CD4-positive, alpha-beta T cell (primary cell): ENCODE measurements at regions of chr13 and their contacts with region 1.

Region 1: GRCh38 chr13:99356158-99357091 is 49.2 kb upstream of the GPR183 start:
- DNase-seq: peak in 12 of 14 experiments; percentile 42 to 97 (median 56)
- ATAC-seq: peak; percentile 54
- H3K4me3 ChIP-seq: peak overlapping the region; percentile 19
- H3K4me3 Mint-ChIP-seq: peak overlapping the region; percentile 49
- H3K27ac ChIP-seq: peak overlapping the region; percentile 93 to 97
- H3K27ac Mint-ChIP-seq: peak overlapping the region; percentile 97
- H3K4me1 ChIP-seq: peaks cover 95% of the 10 kb centered on the region
- H3K4me1 Mint-ChIP-seq: peaks cover 100% of the 10 kb centered on the region
- H3K27me3 ChIP-seq: no peaks in the 10 kb centered on the region
- H3K27me3 Mint-ChIP-seq: no peaks in the 10 kb centered on the region
- CTCF ChIP-seq: no peak

Region 2: DNA sequence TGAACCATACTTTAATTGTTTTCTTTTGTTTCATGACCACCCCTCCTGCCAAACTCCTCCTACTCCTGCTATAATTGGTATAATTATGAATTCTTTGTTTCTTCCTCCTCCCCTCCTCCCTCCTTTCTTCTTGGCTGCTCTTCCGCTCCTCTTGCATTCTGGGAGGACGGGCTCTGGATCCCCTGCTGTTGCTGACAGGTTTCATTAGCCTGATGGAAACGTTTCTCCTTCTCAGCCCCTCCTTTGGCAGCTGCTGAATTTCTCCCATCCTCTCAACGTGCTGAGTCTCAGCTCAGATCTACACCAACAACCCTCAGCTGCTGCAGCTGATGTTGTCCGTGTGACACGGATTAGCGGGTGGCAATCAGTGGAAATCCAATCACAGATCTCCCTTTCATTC is 252.9 kb before region 1 on chr13:
- CTCF ChIA-PET with region 1: no interaction called
- POLR2A ChIA-PET with region 1: no interaction called
- intact Hi-C with region 1: no loop called
- DNase-seq: no peak
- ATAC-seq: no peak
- H3K4me3 ChIP-seq: no peak overlapping the region
- H3K4me3 Mint-ChIP-seq: no peak overlapping the region
- H3K27ac ChIP-seq: no peak overlapping the region
- H3K27ac Mint-ChIP-seq: no peak overlapping the region
- H3K4me1 ChIP-seq: no peaks in the 10 kb centered on the region
- H3K4me1 Mint-ChIP-seq: no peaks in the 10 kb centered on the region
- H3K27me3 ChIP-seq: no peaks in the 10 kb centered on the region
- H3K27me3 Mint-ChIP-seq: no peaks in the 10 kb centered on the region
- CTCF ChIP-seq: no peak

Region 3: GRCh38 chr13:99214232-99214631 is 142.2 kb before region 1 on chr13:
- CTCF ChIA-PET with region 1: no interaction called
- POLR2A ChIA-PET with region 1: interaction called, 6 read pairs
- intact Hi-C with region 1: loop called in 1 of 2 experiments (anchors 5 kb)
- DNase-seq: peak in 7 of 14 experiments; percentile 20 to 54 (median 35)
- ATAC-seq: peak; percentile 23
- H3K4me3 ChIP-seq: peak overlapping the region; percentile 27
- H3K4me3 Mint-ChIP-seq: peak overlapping the region; percentile 91
- H3K27ac ChIP-seq: peak overlapping the region; percentile 39 to 77
- H3K27ac Mint-ChIP-seq: peak overlapping the region; percentile 100
- H3K4me1 ChIP-seq: peaks cover 66% of the 10 kb centered on the region
- H3K4me1 Mint-ChIP-seq: peaks cover 83% of the 10 kb centered on the region
- H3K27me3 ChIP-seq: no peaks in the 10 kb centered on the region
- H3K27me3 Mint-ChIP-seq: no peaks in the 10 kb centered on the region
- CTCF ChIP-seq: no peak

Region 4: DNA sequence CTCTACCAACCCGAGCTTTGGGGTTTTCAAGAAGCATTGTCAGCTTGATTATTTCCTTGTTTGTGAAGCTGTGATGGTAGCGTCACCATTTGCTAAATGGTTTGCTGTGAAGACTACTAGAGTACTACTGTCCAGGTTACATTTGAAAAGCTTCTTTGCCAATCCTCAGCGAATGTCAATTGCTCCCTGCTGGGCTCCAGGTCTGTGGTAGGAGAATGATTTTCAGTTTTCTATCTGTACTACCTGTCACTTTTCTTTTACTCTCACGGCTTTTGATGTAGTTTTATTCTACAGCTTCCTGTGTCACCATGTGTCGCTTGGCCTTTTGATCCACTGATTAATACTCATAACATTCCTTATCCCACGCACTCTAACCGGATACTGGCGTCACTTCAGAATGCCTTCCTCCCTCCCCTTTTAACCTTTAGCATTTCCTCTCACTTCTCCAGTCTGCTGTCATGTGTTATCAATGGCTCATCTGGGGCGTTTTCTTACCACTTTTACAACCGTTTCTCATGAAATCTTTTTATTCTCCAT is 41.7 kb before region 1 on chr13:
- CTCF ChIA-PET with region 1: interaction called, 7 read pairs
- POLR2A ChIA-PET with region 1: interaction called, 220 read pairs
- intact Hi-C with region 1: loop called (anchors 2 to 5 kb)
- DNase-seq: peak in 7 of 14 experiments; percentile 26 to 92 (median 73)
- ATAC-seq: peak; percentile 83
- H3K4me3 ChIP-seq: peak overlapping the region; percentile 50
- H3K4me3 Mint-ChIP-seq: peak overlapping the region; percentile 61
- H3K27ac ChIP-seq: peak overlapping the region; percentile 88 to 89
- H3K27ac Mint-ChIP-seq: peak overlapping the region; percentile 89
- H3K4me1 ChIP-seq: peaks cover 72% of the 10 kb centered on the region
- H3K4me1 Mint-ChIP-seq: peaks cover 85% of the 10 kb centered on the region
- H3K27me3 ChIP-seq: no peaks in the 10 kb centered on the region
- H3K27me3 Mint-ChIP-seq: no peaks in the 10 kb centered on the region
- CTCF ChIP-seq: no peak

Region 5: DNA sequence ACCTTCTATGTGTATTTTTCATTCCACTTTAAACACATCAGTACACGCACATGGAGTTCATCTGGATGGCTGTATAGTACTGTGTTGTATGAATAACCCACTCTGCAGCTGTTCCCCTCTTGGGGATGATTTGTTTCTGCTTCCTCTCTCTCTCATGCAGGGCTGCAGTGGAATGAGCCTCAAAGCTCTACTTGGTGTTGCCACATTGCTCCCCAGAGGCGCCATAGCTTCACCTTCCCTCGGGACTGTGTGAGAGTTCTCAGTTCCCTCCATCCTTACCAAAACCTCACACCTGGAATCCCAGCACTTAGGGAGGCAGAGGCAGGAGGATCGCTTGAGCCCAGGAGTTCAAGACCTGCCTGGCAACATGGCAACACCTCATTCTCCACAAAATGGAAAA is 20.8 kb before region 1 on chr13:
- CTCF ChIA-PET with region 1: interaction called, 6 read pairs
- POLR2A ChIA-PET with region 1: interaction called, 49 read pairs
- intact Hi-C with region 1: loop called in 1 of 2 experiments (anchors 2 kb)
- DNase-seq: no peak
- ATAC-seq: no peak
- H3K4me3 ChIP-seq: no peak overlapping the region
- H3K4me3 Mint-ChIP-seq: no peak overlapping the region
- H3K27ac ChIP-seq: no peak overlapping the region
- H3K27ac Mint-ChIP-seq: peak overlapping the region; percentile 77
- H3K4me1 ChIP-seq: peaks cover 42% of the 10 kb centered on the region
- H3K4me1 Mint-ChIP-seq: peaks cover 90% of the 10 kb centered on the region
- H3K27me3 ChIP-seq: no peaks in the 10 kb centered on the region
- H3K27me3 Mint-ChIP-seq: no peaks in the 10 kb centered on the region
- CTCF ChIP-seq: no peak

Region 6: GRCh38 chr13:99380921-99381645 is 24.7 kb after region 1 on chr13:
- CTCF ChIA-PET with region 1: interaction called, 6 read pairs
- POLR2A ChIA-PET with region 1: interaction called, 153 read pairs
- intact Hi-C with region 1: loop called in 1 of 2 experiments (anchors 1 kb)
- DNase-seq: peak in 13 of 14 experiments; percentile 42 to 77 (median 57)
- ATAC-seq: peak; percentile 40
- H3K4me3 ChIP-seq: no peak overlapping the region
- H3K4me3 Mint-ChIP-seq: peak overlapping the region; percentile 65
- H3K27ac ChIP-seq: peak overlapping the region; percentile 65 to 87
- H3K27ac Mint-ChIP-seq: peak overlapping the region; percentile 88
- H3K4me1 ChIP-seq: peaks cover 89% of the 10 kb centered on the region
- H3K4me1 Mint-ChIP-seq: peaks cover 95% of the 10 kb centered on the region
- H3K27me3 ChIP-seq: no peaks in the 10 kb centered on the region
- H3K27me3 Mint-ChIP-seq: no peaks in the 10 kb centered on the region
- CTCF ChIP-seq: no peak

Region 7: GRCh38 chr13:99417201-99418102 is 61.0 kb after region 1 on chr13:
- CTCF ChIA-PET with region 1: no interaction called
- POLR2A ChIA-PET with region 1: interaction called, 16 read pairs
- intact Hi-C with region 1: no loop called
- DNase-seq: peak in 6 of 14 experiments; percentile 41 to 66 (median 52)
- ATAC-seq: peak; percentile 30
- H3K4me3 ChIP-seq: peak overlapping the region; percentile 52
- H3K4me3 Mint-ChIP-seq: no peak overlapping the region
- H3K27ac ChIP-seq: peak overlapping the region; percentile 59 to 76
- H3K27ac Mint-ChIP-seq: no peak overlapping the region
- H3K4me1 ChIP-seq: peaks cover 88% of the 10 kb centered on the region
- H3K4me1 Mint-ChIP-seq: peaks cover 62% of the 10 kb centered on the region
- H3K27me3 ChIP-seq: no peaks in the 10 kb centered on the region
- H3K27me3 Mint-ChIP-seq: no peaks in the 10 kb centered on the region
- CTCF ChIP-seq: no peak

Region 8: GRCh38 chr13:99778500-99778899 is 422.1 kb after region 1 on chr13:
- CTCF ChIA-PET with region 1: no interaction called
- POLR2A ChIA-PET with region 1: no interaction called
- intact Hi-C with region 1: no loop called
- DNase-seq: no peak
- ATAC-seq: no peak
- H3K4me3 ChIP-seq: no peak overlapping the region
- H3K4me3 Mint-ChIP-seq: no peak overlapping the region
- H3K27ac ChIP-seq: no peak overlapping the region
- H3K27ac Mint-ChIP-seq: no peak overlapping the region
- H3K4me1 ChIP-seq: no peaks in the 10 kb centered on the region
- H3K4me1 Mint-ChIP-seq: no peaks in the 10 kb centered on the region
- H3K27me3 ChIP-seq: no peaks in the 10 kb centered on the region
- H3K27me3 Mint-ChIP-seq: no peaks in the 10 kb centered on the region
- CTCF ChIP-seq: no peak